ENCODE measurements at regions of chr19 and their contacts with region 1.

Region 1: DNA sequence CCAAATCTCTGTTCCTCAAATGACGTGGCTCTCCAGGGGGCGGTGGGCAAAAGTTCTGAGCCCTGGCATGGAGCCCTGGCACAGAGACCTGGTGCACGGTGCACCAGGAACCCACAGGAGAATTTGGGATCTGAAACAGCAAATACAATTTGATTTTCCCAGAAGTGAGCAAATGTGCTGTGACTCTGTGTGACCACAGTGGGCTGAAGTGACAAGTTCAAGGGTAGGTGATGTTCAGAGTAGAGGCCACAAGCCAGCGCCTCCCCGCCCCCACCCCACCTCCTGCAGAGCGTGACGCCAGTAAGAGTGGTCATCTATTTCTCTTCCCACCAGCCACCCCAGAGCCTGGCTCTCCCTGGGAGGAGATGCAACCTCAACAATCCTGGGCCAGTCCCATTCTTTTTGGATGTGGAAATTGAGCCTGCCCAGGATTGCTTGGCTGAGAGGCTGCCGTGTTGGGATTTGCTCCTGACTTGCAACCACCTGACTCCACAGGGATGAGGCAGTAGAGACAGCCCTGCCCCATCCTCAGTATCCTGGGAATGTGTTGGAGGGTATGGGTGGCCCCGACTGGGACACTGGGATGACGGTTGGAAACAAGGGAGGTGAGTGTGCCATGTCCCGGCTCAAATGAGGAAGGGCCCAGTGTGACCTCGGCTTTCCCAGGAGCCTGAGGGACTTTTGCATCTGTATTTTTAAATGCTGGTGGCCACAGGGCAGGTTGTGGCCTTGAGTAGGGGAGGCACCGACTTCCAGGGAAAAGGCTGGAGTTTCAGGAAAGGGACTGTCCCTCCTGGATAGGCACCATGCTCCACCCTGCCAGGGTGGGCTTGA is 11.1 kb upstream of the BCL3 start:
- DNase-seq: peak in 1 of 2 donors; percentile 28
- ATAC-seq: peak; percentile 53 to 85 (median 68)
- H3K4me3 ChIP-seq: no peak overlapping the region
- H3K4me3 Mint-ChIP-seq: peak overlapping the region; percentile 72
- H3K27ac ChIP-seq: peak overlapping the region; percentile 14
- H3K27ac Mint-ChIP-seq: peak overlapping the region; percentile 67 to 77
- H3K4me1 ChIP-seq: peaks cover 55% of the 10 kb centered on the region
- H3K4me1 Mint-ChIP-seq: peaks cover 18 to 39% of the 10 kb centered on the region in 2 donors
- H3K27me3 ChIP-seq: no peaks in the 10 kb centered on the region
- H3K27me3 Mint-ChIP-seq: no peaks in the 10 kb centered on the region
- CTCF ChIP-seq: no peak

Region 2: GRCh38 chr19:44718441-44719261 is 18.8 kb before region 1 on chr19:
- intact Hi-C with region 1: no loop called
- DNase-seq: no peak
- ATAC-seq: no peak
- H3K4me3 ChIP-seq: no peak overlapping the region
- H3K4me3 Mint-ChIP-seq: no peak overlapping the region
- H3K27ac ChIP-seq: no peak overlapping the region
- H3K27ac Mint-ChIP-seq: no peak overlapping the region
- H3K4me1 ChIP-seq: peaks cover 16% of the 10 kb centered on the region
- H3K4me1 Mint-ChIP-seq: peaks cover 0 to 2% of the 10 kb centered on the region in 2 donors
- H3K27me3 ChIP-seq: no peaks in the 10 kb centered on the region
- H3K27me3 Mint-ChIP-seq: peaks cover 0 to 4% of the 10 kb centered on the region in 2 donors
- CTCF ChIP-seq: no peak

Region 3: DNA sequence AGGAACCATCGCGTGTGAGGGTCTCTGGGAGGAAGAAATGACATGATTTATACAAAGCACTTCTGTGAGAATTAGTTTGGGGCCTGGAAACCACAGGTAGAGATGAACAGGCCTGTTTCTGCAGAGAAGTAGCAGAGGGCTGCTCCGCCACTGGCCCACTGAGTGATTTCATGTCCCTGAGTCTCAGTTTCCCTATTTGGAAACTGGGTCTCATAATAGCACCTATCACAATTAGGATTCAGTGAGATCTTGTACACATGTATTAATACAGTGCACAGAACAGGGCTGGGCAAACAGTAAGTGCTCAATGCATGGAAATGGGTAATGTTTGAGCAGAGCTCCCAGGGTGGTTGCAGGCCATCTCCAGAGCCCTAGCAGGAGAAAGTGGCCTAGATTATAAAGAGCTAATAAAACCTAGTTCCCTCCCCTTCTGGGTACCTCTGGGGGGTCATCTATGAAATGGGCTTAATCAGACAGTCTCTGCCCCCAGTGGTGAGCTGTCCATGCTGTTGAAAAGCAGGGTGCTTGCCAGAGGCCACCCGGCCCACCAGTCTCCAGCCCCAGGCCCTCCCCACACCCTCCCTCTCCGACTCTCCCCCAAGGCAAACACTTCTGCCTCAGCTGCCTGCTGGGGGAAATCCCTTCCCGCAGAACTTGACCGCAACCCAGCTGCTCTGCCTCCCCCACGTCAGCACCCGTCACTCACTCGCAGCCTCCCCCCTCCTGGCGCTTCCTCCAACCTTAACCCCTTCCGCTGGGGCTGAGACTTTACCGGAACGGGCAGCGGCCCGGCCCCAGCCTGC is 15.6 kb after region 1 on chr19:
- intact Hi-C with region 1: loop called (anchors 2 kb)
- DNase-seq: peak; percentile 96 to 99
- ATAC-seq: peak; percentile 74 to 90 (median 76)
- H3K4me3 ChIP-seq: peak overlapping the region; percentile 75
- H3K4me3 Mint-ChIP-seq: peak overlapping the region; percentile 89
- H3K27ac ChIP-seq: peak overlapping the region; percentile 99
- H3K27ac Mint-ChIP-seq: peak overlapping the region; percentile 91 to 93
- H3K4me1 ChIP-seq: peaks cover 75% of the 10 kb centered on the region
- H3K4me1 Mint-ChIP-seq: peaks cover 43 to 62% of the 10 kb centered on the region in 2 donors
- H3K27me3 ChIP-seq: no peaks in the 10 kb centered on the region
- H3K27me3 Mint-ChIP-seq: no peaks in the 10 kb centered on the region
- CTCF ChIP-seq: no peak

Region 4: DNA sequence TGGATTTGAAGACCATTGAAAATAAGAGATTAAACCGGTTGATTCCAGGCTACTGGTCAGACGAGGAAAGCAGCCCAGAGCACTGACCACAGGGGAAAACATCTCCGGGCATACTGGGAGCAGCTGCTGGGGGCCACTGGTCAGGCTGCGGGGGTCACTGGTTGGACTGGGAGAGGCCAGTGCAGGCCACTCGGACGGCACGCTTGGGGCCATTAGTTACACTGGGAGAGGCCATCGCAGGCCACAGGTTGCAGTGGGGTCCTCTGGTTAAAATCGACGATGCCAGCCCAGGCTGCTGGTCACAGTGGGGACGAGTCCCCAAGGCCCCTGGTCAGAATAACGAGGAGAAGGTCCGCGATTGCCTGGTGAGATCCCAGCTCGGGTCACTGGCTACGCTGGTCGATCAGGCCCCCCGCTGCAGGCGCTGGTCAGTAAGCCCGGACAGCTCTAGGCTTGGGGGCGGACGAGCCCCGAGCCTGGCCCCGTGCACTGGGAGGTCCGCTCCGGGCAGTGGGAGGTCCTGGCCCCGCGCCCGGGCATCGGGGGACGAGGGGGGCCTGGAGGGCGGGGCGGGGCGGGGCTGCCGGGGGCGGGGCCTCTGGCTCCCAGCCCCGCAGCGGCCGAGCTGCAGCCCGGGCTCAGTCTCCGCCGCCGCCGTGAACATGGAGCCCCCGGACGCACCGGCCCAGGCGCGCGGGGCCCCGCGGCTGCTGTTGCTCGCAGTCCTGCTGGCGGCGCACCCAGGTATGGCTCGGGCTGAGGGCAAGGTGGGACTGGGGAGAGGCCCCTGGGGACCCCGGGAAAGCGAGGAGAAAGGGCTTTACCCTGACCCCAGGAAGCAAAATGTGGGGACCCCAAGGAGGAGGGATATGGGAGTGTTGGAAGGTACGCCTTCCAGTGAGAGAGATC is 71.3 kb after region 1 on chr19 and contains the start of gene BCAM:
- intact Hi-C with region 1: no loop called
- DNase-seq: peak in 1 of 2 donors; percentile 19
- ATAC-seq: peak in 2 of 3 donors; percentile 42 to 44
- H3K4me3 ChIP-seq: no peak within 1 kb of the TSS
- H3K4me3 Mint-ChIP-seq: peak within 1 kb of the TSS; percentile 37
- H3K27ac ChIP-seq: no peak within 1 kb of the TSS
- H3K27ac Mint-ChIP-seq: no peak within 1 kb of the TSS
- H3K4me1 ChIP-seq: peaks cover 11% of the 10 kb centered on the region
- H3K4me1 Mint-ChIP-seq: peaks cover 0 to 3% of the 10 kb centered on the region in 2 donors
- H3K27me3 ChIP-seq: peaks cover 8% of the 10 kb centered on the region
- H3K27me3 Mint-ChIP-seq: peaks cover 0 to 8% of the 10 kb centered on the region in 2 donors
- CTCF ChIP-seq: no peak
- total RNA-seq, gene BCAM: not detected